HEK293 (cell line): ENCODE measurements at regions of chr1 and their contacts with region 1.

Region 1: GRCh38 chr1:1906185-1907097 is 8.6 kb upstream of the CALML6 start:
- H3K4me3 ChIP-seq: no peak overlapping the region
- H3K27ac ChIP-seq: peak overlapping the region; percentile 82
- H3K4me1 ChIP-seq: no peaks in the 10 kb centered on the region; the same call in 1 of the 2 replicates
- CTCF ChIP-seq: peak; percentile 94

Region 2: DNA sequence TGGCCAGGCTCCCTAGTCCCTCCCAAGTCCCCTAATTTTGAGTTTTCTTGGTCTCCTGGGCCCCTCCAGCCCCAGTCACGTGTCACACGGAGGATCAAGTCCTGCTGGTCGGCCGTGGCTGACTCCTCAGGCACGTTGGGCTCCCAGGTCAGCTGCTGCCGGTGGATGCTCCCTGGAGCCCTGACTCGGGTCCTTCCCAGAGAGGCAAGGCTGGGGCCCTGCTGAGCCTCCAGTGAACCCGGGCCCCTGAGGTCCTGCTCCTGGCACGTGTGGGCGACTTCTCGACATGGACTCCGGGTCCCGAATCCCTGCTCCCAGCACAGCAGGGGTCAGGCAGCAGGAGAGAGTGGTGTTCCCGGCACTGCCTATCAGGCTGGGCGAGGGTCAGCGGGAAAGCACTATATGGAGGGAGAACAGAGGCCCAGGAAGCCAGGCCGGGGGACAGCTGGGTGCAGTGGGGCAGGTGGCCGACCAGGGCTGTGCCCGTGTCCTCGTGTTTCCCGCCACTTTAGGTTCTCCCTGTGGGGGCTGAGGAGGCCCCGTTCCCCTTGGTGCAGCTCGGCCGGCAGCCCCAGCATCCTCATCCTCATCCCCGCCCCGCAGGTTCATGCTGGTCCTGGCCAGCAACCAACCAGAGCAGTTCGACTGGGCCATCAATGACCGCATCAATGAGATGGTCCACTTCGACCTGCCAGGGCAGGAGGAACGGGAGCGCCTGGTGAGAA is 379.2 kb before region 1 on chr1:
- CTCF ChIA-PET with region 1: no interaction called
- POLR2A ChIA-PET with region 1: no interaction called
- H3K4me3 ChIP-seq: no peak overlapping the region
- H3K27ac ChIP-seq: no peak overlapping the region
- H3K4me1 ChIP-seq: no peaks in the 10 kb centered on the region
- CTCF ChIP-seq: no peak

Region 3: DNA sequence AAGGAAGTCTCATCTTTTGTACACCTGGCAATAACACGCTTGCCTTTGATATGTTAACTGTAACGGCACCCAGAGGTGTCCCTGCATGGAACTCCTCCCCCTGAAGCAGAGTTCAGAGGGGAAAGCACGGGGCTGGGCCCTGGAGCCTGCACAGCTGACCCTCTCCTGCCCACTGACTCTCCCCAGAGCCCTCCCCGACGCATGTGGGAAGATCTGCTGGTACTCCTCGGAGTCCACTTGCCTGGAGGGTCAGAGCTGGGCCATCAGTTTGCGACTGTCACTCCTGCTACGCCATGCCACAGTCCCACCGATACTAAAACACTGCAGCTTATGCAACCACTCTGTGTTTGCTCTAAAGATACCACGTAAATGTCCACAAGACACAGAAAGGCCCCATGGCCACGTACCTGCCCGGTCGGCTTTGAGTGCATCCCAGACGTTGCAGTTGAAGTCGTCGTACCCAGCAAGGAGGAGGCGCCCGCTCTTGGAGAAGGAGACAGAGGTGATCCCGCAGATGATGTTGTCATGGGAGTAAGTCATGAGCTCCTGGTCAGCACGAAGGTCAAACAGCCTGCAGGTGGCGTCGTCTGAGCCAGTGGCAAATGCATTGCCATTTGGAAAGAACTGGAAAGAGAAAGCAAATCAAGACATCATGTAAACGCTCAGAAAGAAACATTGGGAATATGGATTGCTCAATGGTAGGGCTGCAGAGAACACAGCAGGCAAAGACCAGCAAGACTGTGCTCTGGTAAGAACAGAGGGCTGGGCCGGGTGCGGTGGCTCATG is 117.6 kb before region 1 on chr1:
- CTCF ChIA-PET with region 1: interaction called, 23 read pairs
- POLR2A ChIA-PET with region 1: no interaction called
- H3K4me3 ChIP-seq: no peak overlapping the region
- H3K27ac ChIP-seq: no peak overlapping the region
- H3K4me1 ChIP-seq: no peaks in the 10 kb centered on the region
- CTCF ChIP-seq: 0 out of 2 replicates have a peak, but pooled peaks have one; percentile 33

Region 4: GRCh38 chr1:1881727-1882126 is 24.7 kb before region 1 on chr1:
- CTCF ChIA-PET with region 1: interaction called, 10 read pairs
- POLR2A ChIA-PET with region 1: interaction called, 3 read pairs
- H3K4me3 ChIP-seq: no peak overlapping the region
- H3K27ac ChIP-seq: no peak overlapping the region
- H3K4me1 ChIP-seq: peaks cover 9% of the 10 kb centered on the region
- CTCF ChIP-seq: no peak